ENCODE measurements at regions of chr21 and their contacts with region 1.

Region 1: DNA sequence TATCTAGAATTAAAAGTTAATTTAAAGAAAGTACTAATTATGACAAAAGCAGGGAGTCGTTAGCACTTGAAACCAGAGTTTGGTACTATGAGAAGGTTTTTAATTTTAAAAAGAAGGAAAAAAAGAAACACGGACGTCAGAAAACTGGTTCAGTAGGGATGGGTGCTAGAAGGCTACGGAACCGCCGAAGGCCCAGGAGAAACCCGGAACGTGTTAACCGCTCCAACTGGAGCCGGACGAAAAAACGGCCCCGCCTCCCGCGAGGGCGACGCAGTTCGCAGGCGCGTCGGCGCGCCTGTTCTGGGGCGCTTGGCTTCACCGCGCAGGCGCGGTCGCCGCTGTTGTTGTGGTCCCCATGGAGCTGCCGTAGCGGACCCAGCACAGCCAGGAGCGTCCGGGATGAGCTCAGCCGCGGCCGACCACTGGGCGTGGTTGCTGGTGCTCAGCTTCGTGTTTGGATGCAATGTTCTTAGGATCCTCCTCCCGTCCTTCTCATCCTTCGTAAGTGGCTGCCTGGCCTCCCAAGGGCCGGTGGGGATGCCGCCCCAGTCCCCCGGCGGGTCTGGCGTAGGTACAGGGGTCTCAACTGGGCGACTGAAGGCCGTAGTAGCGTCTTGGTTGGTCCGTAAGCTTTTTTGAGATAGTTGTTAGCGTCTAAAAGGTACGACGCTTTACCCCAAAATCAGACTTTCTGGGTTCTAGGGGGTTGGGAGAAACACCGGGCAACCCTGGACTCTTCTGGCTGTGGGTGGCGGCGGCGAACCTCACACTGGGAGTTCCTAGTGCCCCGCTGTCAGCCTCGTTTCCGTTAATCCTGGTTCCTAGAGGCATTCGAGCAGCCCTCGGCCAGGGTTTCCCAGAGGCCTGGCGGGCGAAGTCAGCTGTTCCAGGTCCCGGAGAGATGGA is 31.4 kb upstream of the HMGN1 start:
- DNase-seq: peak; percentile 75 to 95 (median 89)
- ATAC-seq: peak; percentile 97
- H3K4me3 ChIP-seq: peak overlapping the region; percentile 70 to 91
- H3K4me3 Mint-ChIP-seq: peak overlapping the region; percentile 93
- H3K27ac ChIP-seq: peak overlapping the region; percentile 80 to 92
- H3K27ac Mint-ChIP-seq: peak overlapping the region; percentile 93
- H3K4me1 ChIP-seq: peaks cover 12% of the 10 kb centered on the region
- H3K4me1 Mint-ChIP-seq: peaks cover 26% of the 10 kb centered on the region
- H3K27me3 ChIP-seq: peaks cover 0 to 2% of the 10 kb centered on the region in 2 experiments
- H3K27me3 Mint-ChIP-seq: peaks cover 4% of the 10 kb centered on the region
- CTCF ChIP-seq: no peak

Region 2: GRCh38 chr21:39349211-39350093 is 30.8 kb before region 1 on chr21:
- CTCF ChIA-PET with region 1: no interaction called
- POLR2A ChIA-PET with region 1: interaction called, 6 read pairs
- intact Hi-C with region 1: loop called (anchors 1 kb)
- DNase-seq: peak; percentile 91 to 98 (median 97)
- ATAC-seq: peak; percentile 83
- H3K4me3 ChIP-seq: peak overlapping the region; percentile 74 to 75
- H3K4me3 Mint-ChIP-seq: peak overlapping the region; percentile 96
- H3K27ac ChIP-seq: peak overlapping the region; percentile 89 to 95
- H3K27ac Mint-ChIP-seq: peak overlapping the region; percentile 99
- H3K4me1 ChIP-seq: peaks cover 42% of the 10 kb centered on the region
- H3K4me1 Mint-ChIP-seq: peaks cover 38% of the 10 kb centered on the region
- H3K27me3 ChIP-seq: no peaks in the 10 kb centered on the region
- H3K27me3 Mint-ChIP-seq: no peaks in the 10 kb centered on the region
- CTCF ChIP-seq: no peak

Measured in CD8-positive, alpha-beta T cell (primary cell).